CD4-positive, alpha-beta T cell (primary cell): ENCODE measurements at regions of chr2 and their contacts with region 1.

Region 1: GRCh38 chr2:223970343-223971128 is 13.3 kb downstream of the MRPL44 start:
- DNase-seq: peak in 12 of 14 experiments; percentile 14 to 81 (median 40)
- ATAC-seq: peak; percentile 76
- H3K4me3 ChIP-seq: no peak overlapping the region
- H3K4me3 Mint-ChIP-seq: no peak overlapping the region
- H3K27ac ChIP-seq: no peak overlapping the region
- H3K27ac Mint-ChIP-seq: no peak overlapping the region
- H3K4me1 ChIP-seq: no peaks in the 10 kb centered on the region
- H3K4me1 Mint-ChIP-seq: peaks cover 4% of the 10 kb centered on the region
- H3K27me3 ChIP-seq: no peaks in the 10 kb centered on the region
- H3K27me3 Mint-ChIP-seq: no peaks in the 10 kb centered on the region
- CTCF ChIP-seq: peak; percentile 96

Region 2: DNA sequence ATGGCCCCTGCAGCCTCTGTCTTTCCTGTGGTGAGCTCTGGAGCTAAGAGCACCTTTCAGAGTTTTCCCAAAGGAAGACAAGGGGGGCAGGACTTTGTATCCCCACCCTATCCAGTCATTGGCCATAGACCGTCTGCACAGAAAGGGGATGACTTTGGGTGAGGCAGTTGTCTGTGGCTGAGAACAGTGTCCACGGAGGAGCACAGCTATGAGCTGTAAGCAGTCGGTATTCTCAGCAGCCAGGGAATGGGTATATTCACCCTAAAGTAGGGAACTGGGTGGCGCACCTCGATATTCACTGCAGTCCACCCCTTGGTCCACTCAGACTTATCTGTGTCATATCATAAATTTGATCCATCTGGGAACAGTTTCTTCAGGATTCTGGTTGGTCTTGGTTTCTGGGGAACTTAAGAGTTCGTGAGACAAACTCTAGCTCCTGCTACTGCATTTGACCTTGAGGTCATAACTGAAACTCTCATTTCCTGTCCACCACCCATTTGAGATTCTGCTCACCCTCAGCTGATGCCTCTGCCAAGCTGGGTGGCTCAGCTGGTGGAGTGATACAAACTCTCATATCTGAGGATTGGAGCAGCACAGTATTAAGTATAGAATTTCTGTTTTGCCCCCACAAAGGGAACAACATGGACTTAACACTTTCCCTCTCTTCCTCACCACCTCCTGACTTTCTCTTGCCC is 323.1 kb before region 1 on chr2:
- CTCF ChIA-PET with region 1: no interaction called
- POLR2A ChIA-PET with region 1: no interaction called
- intact Hi-C with region 1: no loop called
- DNase-seq: no peak
- ATAC-seq: no peak
- H3K4me3 ChIP-seq: no peak overlapping the region
- H3K4me3 Mint-ChIP-seq: no peak overlapping the region
- H3K27ac ChIP-seq: no peak overlapping the region
- H3K27ac Mint-ChIP-seq: no peak overlapping the region
- H3K4me1 ChIP-seq: no peaks in the 10 kb centered on the region
- H3K4me1 Mint-ChIP-seq: no peaks in the 10 kb centered on the region
- H3K27me3 ChIP-seq: peaks cover 0 to 2% of the 10 kb centered on the region in 2 experiments
- H3K27me3 Mint-ChIP-seq: peaks cover 17% of the 10 kb centered on the region
- CTCF ChIP-seq: no peak

Region 3: GRCh38 chr2:223930103-223930976 is 40.2 kb before region 1 on chr2:
- CTCF ChIA-PET with region 1: no interaction called
- POLR2A ChIA-PET with region 1: interaction called, 3 read pairs
- intact Hi-C with region 1: loop called in 1 of 2 experiments (anchors 5 kb)
- DNase-seq: peak in 2 of 14 experiments; percentile 37 to 54
- ATAC-seq: no peak
- H3K4me3 ChIP-seq: no peak overlapping the region
- H3K4me3 Mint-ChIP-seq: peak overlapping the region; percentile 68
- H3K27ac ChIP-seq: no peak overlapping the region
- H3K27ac Mint-ChIP-seq: peak overlapping the region; percentile 68
- H3K4me1 ChIP-seq: peaks cover 28% of the 10 kb centered on the region
- H3K4me1 Mint-ChIP-seq: peaks cover 68% of the 10 kb centered on the region
- H3K27me3 ChIP-seq: no peaks in the 10 kb centered on the region
- H3K27me3 Mint-ChIP-seq: no peaks in the 10 kb centered on the region
- CTCF ChIP-seq: no peak

Region 4: GRCh38 chr2:224284134-224284946 is 313.8 kb after region 1 on chr2:
- CTCF ChIA-PET with region 1: interaction called, 26 read pairs
- POLR2A ChIA-PET with region 1: interaction called, 11 read pairs
- intact Hi-C with region 1: loop called (anchors 1 kb)
- DNase-seq: peak in 5 of 14 experiments; percentile 2 to 60 (median 44)
- ATAC-seq: no peak
- H3K4me3 ChIP-seq: no peak overlapping the region
- H3K4me3 Mint-ChIP-seq: no peak overlapping the region
- H3K27ac ChIP-seq: no peak overlapping the region
- H3K27ac Mint-ChIP-seq: no peak overlapping the region
- H3K4me1 ChIP-seq: no peaks in the 10 kb centered on the region
- H3K4me1 Mint-ChIP-seq: no peaks in the 10 kb centered on the region
- H3K27me3 ChIP-seq: peaks cover under 1 to 18% of the 10 kb centered on the region in 2 experiments
- H3K27me3 Mint-ChIP-seq: peaks cover 40% of the 10 kb centered on the region
- CTCF ChIP-seq: peak; percentile 62

Region 5: GRCh38 chr2:224369028-224369632 is 398.6 kb after region 1 on chr2:
- CTCF ChIA-PET with region 1: interaction called, 5 read pairs
- POLR2A ChIA-PET with region 1: no interaction called
- intact Hi-C with region 1: loop called (anchors 1 to 2 kb)
- DNase-seq: peak in 4 of 14 experiments; percentile 19 to 64 (median 46)
- ATAC-seq: no peak
- H3K4me3 ChIP-seq: no peak overlapping the region
- H3K4me3 Mint-ChIP-seq: no peak overlapping the region
- H3K27ac ChIP-seq: no peak overlapping the region
- H3K27ac Mint-ChIP-seq: no peak overlapping the region
- H3K4me1 ChIP-seq: peaks cover 4% of the 10 kb centered on the region
- H3K4me1 Mint-ChIP-seq: no peaks in the 10 kb centered on the region
- H3K27me3 ChIP-seq: no peaks in the 10 kb centered on the region
- H3K27me3 Mint-ChIP-seq: no peaks in the 10 kb centered on the region
- CTCF ChIP-seq: peak; percentile 75

Region 6: GRCh38 chr2:224449212-224450147 is 478.9 kb after region 1 on chr2:
- CTCF ChIA-PET with region 1: no interaction called
- POLR2A ChIA-PET with region 1: no interaction called
- intact Hi-C with region 1: loop called in 1 of 2 experiments (anchors 1 kb)
- DNase-seq: peak in 3 of 14 experiments; percentile 10 to 47 (median 33)
- ATAC-seq: no peak
- H3K4me3 ChIP-seq: no peak overlapping the region
- H3K4me3 Mint-ChIP-seq: no peak overlapping the region
- H3K27ac ChIP-seq: no peak overlapping the region
- H3K27ac Mint-ChIP-seq: no peak overlapping the region
- H3K4me1 ChIP-seq: no peaks in the 10 kb centered on the region
- H3K4me1 Mint-ChIP-seq: no peaks in the 10 kb centered on the region
- H3K27me3 ChIP-seq: no peaks in the 10 kb centered on the region
- H3K27me3 Mint-ChIP-seq: peaks cover 21% of the 10 kb centered on the region
- CTCF ChIP-seq: peak; percentile 57

Region 7: DNA sequence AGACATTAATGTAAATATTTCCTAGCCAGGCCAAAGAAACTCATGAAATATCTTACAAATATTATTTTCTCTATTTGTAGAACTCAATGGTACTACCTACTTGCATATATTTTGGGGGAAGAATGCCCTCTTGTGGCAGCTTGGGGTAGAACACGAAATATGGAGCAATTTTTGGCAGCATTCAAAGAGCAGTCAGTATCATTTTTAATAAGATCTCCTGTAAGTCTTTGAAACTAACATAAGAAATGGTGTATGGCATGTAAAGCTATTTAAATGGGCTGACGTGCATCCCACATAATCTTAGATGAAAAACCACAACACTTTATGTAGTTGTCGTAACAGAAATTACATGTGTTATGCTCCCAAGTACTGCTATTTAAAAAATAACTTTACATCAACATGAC is 807.9 kb after region 1 on chr2:
- CTCF ChIA-PET with region 1: no interaction called
- POLR2A ChIA-PET with region 1: no interaction called
- intact Hi-C with region 1: loop called (anchors 5 to 10 kb)
- DNase-seq: peak; percentile 23 to 75 (median 50)
- ATAC-seq: peak; percentile 78
- H3K4me3 ChIP-seq: no peak overlapping the region
- H3K4me3 Mint-ChIP-seq: no peak overlapping the region
- H3K27ac ChIP-seq: no peak overlapping the region
- H3K27ac Mint-ChIP-seq: peak overlapping the region; percentile 59
- H3K4me1 ChIP-seq: no peaks in the 10 kb centered on the region
- H3K4me1 Mint-ChIP-seq: peaks cover 8% of the 10 kb centered on the region
- H3K27me3 ChIP-seq: no peaks in the 10 kb centered on the region
- H3K27me3 Mint-ChIP-seq: no peaks in the 10 kb centered on the region
- CTCF ChIP-seq: peak; percentile 97